ENCODE measurements at regions of chr19 and their contacts with region 1.

Region 1: DNA sequence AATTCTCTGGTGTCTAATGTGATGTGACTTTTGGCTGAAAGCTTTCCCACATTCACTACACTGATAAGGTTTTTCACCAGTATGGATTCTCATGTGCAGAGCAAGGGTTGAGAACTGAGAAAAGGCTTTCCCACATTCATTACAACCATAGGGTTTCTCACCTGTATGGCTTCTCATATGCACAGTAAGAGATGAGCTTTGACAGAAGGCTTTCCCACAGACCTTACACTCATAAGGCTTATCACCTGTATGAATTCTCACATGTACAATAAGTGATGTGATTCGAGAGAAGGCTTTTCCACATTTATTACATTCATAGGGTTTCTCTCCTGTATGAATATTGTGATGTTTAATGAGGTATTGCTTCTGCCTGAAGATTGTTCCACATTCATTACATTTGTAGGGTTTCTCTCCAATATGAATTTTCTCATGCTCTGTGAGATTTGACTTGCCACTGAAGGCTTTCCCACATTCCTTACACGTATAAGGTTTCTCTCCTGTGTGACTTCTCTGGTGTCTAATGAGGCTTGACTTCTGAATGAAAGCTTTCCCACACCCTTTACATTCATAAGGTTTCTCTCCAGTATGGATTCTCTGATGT is 14.0 kb downstream of the ZNF260 start:
- H3K4me3 ChIP-seq: no peak overlapping the region
- H3K27ac ChIP-seq: no peak overlapping the region
- H3K4me1 ChIP-seq: no peaks in the 10 kb centered on the region
- CTCF ChIP-seq: no peak

Region 2: GRCh38 chr19:36436531-36436930 is 77.6 kb before region 1 on chr19:
- CTCF ChIA-PET with region 1: no interaction called
- POLR2A ChIA-PET with region 1: interaction called, 11 read pairs
- H3K4me3 ChIP-seq: no peak overlapping the region
- H3K27ac ChIP-seq: no peak overlapping the region
- H3K4me1 ChIP-seq: no peaks in the 10 kb centered on the region
- CTCF ChIP-seq: no peak

Region 3: DNA sequence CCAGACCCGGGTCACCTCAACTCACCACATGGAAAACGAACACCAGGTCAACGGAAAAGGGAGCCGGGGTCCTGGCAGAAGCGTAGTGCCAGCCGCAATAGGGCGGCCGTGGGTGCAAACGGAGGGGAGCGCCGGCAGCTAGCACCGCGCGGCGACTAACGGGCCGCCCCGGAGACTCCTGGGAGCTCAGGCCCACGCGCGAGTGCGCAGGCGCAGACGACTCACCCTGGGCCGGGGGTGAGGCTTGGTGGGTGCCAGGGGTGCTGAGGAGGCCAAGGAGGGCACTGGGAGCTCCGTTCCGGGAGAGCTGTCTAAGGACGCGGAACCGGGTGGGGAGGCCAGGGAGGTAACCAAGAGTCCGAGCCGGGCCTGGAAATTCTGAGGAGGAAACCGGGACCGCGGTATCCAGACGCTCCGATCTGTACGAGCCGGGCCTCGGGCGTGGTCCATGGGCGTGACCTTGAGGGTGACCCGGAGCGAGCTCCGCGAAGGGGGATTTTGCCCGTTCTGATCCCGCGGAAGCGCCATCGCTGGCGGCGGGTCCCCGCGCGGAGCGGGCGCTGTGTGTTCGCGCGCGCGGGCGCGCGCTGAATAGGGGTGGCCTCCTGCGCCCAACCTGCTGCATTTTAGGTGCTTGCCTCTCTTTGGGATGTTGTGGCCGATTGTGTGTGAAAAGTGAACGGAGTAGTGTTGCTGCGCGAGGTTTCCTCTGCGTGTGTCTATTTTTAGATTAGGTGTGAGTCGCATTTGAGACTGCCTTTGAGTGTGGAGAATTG is 91.2 kb after region 1 on chr19 and contains the start of gene ZNF382:
- CTCF ChIA-PET with region 1: no interaction called
- POLR2A ChIA-PET with region 1: no interaction called
- H3K4me3 ChIP-seq: peak within 1 kb of the TSS; percentile 57
- H3K27ac ChIP-seq: peak within 1 kb of the TSS; percentile 98
- H3K4me1 ChIP-seq: peaks cover 6% of the 10 kb centered on the region
- CTCF ChIP-seq: no peak; the same call in none of the 2 replicates